ENCODE measurements at regions of chr3 and their contacts with region 1.

Region 1: GRCh38 chr3:114242947-114243346 is 5.6 kb upstream of the ZNF80 start:
- DNase-seq: peak; percentile 80
- H3K4me3 Mint-ChIP-seq: no peak overlapping the region
- H3K27ac Mint-ChIP-seq: no peak overlapping the region
- H3K4me1 Mint-ChIP-seq: peaks cover 21% of the 10 kb centered on the region
- H3K27me3 Mint-ChIP-seq: no peaks in the 10 kb centered on the region

Region 2: GRCh38 chr3:114213627-114214541 is 29.1 kb before region 1 on chr3:
- intact Hi-C with region 1: loop called (anchors 1 kb)
- DNase-seq: peak; percentile 89
- H3K4me3 Mint-ChIP-seq: no peak overlapping the region
- H3K27ac Mint-ChIP-seq: no peak overlapping the region
- H3K4me1 Mint-ChIP-seq: peaks cover 23% of the 10 kb centered on the region
- H3K27me3 Mint-ChIP-seq: no peaks in the 10 kb centered on the region

Region 3: DNA sequence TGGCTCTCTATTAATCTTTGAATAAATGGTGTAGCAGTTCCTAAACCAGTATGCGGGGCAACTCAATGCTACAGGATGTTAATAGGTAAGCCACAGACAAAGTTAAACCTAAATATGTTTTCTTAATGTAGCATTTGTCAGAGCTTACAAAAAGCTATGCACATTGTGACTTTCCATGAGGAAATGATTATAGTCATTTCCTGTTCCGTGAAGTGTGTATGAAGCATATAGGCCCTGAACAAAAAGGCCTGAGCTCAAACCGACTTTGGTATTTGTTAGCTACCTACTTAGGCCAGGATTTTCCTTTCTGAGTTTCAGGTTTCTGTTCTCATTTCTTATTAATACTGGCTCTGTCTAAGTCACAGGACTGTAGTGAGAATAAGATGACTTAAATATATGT is 19.8 kb before region 1 on chr3:
- intact Hi-C with region 1: loop called (anchors 1 kb)
- DNase-seq: peak; percentile 73
- H3K4me3 Mint-ChIP-seq: peak overlapping the region; percentile 24
- H3K27ac Mint-ChIP-seq: peak overlapping the region; percentile 86
- H3K4me1 Mint-ChIP-seq: peaks cover 51% of the 10 kb centered on the region
- H3K27me3 Mint-ChIP-seq: no peaks in the 10 kb centered on the region

Region 4: DNA sequence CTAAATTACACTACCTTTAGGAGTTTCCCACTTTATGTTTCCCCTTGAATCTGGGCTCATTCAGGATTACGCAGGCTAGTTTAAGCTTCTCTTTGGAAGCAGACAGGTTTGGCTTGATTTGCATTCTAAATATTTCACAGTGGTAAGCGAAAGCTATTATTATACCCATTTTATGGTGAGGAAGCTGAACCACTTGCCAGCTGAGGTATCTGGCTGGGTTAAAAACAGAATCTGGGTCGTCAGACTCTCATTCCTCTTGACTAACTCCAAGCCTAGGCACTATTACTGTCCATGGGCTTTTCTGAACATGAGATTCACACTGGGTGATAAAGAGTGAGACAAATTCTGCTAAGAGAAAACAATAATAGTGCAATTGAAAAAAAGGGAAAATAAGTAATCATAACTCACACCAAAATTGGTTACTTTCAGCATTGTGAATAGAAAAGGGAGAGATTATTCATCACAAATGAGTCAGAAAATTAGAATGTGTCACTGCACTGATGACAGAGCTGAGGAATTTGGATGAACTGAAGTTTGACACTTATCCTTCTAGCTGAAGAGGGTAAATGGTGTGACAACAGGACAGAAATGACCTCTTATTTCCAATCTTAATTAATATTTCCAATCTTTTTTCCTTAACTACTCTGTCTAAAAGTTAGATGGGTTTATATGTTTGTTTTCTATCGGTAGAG is 262.1 kb after region 1 on chr3:
- intact Hi-C with region 1: no loop called
- DNase-seq: no peak
- H3K4me3 Mint-ChIP-seq: no peak overlapping the region
- H3K27ac Mint-ChIP-seq: no peak overlapping the region
- H3K4me1 Mint-ChIP-seq: peaks cover 8% of the 10 kb centered on the region
- H3K27me3 Mint-ChIP-seq: peaks cover 35% of the 10 kb centered on the region